Left cardiac atrium (tissue), 4 donors: ENCODE measurements at regions of chr15 and their contacts with region 1.

Region 1: GRCh38 chr15:83011271-83012075 is at the start of gene C15orf40:
- DNase-seq: peak; percentile 93
- ATAC-seq: peak; percentile 99
- total RNA-seq, gene C15orf40: 10.9 to 13.4 TPM

Region 2: DNA sequence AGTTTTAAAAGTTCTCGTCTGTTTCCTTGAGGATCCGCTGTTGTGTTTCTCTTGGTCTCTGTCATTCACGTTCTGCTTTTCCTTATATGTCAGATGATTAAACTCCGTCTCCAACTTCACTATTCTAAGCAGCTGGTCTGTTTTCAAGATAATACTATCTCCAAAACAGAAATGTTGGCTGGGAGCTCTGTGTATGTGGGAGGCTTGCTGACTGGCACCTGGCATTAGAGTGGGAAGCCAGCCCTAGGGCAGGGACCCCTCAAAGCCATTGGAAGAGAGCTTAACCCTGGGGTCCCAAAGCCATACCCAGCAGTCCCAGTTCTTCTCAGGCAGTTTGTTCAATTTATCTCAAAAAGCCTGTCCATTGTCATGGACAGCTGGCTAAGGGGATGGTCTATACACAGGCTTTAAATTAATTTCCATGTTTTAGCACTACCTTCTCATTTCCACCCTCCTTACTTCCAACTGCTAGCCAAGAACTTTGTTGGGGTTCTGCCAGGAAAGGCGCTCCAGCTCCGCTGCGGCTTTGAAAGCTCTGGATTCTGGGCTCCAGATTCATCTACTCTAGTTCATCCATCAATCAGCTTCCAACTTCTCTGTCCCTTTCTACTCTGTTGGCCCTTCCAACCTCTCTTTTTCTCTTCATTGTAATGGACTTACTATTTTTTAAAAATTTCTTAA is 46.4 kb after region 1 on chr15:
- intact Hi-C with region 1: loop called in 1 of 2 experiments (anchors 5 kb)
- DNase-seq: no peak
- ATAC-seq: peak; percentile 82 to 84

Region 3: DNA sequence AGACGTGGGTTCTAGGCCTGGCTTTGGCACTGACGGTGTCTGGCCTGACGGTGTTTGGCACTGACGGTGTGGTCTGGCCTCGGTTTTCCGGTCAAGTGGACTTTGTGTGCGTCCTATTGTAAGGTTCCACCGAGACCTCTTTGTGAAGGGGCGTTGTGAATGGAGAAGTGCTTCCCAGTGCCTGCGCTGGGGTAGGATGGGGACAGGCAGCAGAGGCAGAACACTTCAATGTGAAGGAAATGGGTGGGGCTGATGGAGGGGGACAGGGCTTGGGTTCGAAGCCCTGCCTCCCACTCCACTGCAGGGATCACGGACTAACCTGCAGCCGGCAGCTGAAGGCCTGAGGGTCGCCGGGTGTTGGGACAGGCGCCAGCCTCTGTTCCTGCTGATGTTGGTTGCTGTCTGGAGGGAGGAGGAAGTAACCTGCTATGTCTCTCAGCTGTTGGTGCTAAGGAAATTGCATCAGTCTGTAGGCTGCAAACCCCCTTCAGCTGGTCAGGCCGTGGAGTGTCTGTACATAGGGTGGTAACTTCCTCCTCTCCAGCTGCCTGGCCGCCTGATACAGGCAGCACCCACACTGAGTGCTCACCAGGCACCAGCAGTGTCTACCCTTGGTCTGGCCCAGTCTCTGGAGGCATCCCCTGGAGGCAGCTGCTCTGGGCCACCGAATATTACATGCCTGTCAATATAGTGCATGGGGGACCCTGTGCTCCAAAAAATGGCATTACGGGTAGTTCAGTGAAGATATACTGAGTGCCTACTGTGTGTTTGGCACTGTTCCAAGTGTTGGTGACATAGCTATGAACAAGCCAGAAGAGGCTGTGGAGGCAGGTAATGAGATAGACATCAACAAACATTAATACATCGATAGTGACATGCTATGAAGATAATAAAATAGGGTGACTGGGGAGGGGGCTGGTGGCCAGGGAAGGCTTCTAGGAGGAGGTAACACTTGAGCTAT is 97.1 kb after region 1 on chr15:
- intact Hi-C with region 1: loop called (anchors 5 to 10 kb)
- DNase-seq: peak; percentile 69
- ATAC-seq: peak; percentile 46 to 83

Region 4: DNA sequence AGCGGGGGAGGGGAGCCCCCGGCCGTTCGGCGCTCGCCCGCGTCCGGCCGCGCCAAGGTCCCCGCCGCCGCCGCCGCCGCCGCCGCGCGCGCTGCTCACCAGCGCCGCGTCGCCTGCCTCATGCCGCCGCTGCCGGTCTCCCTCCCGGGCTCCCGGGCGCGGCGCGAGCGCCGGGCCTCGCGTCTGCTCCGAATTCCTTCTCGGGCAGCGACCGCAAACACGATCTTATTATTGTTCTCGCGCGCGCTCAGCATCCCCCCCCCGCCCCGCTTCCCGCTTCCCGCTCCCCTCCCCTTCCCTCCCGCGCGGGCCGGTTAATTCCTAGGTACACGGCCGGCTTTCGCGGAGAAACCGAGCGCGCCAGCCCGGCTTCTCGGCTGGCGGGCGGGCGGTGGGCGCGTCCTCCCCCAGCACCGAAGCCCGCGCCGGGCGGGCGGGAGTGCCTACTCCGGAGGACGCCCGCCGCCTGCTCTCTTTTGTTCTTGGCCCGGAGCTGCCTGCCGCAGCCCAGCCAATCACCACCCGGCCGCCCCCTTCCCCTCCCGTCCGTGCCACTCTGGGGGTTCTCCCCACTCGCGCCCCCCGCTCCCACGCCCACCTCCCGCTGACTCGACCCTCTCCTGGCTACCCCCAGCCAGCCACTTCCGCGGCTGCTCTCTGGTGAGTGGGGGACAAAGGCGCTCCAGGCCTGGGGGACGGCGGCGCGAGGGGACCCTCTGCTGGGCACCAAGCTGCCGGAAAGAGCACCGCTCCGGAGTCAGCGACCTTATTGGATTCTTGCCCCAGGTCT is 196.3 kb after region 1 on chr15 and contains the start of gene HDGFL3:
- intact Hi-C with region 1: loop called in 1 of 2 experiments (anchors 5 kb)
- DNase-seq: peak; percentile 73
- ATAC-seq: peak; percentile 48 to 72
- total RNA-seq, gene HDGFL3: 30.6 to 48.1 TPM

Region 5: GRCh38 chr15:83504365-83504764 is 492.9 kb after region 1 on chr15:
- intact Hi-C with region 1: no loop called
- DNase-seq: no peak
- ATAC-seq: no peak